Activated naive CD4-positive, alpha-beta T cell treated with anti-CD3 and anti-CD28 coated beads for 36 hours (primary cell): ENCODE measurements at regions of chr21 and their contacts with region 1.

Region 1: DNA sequence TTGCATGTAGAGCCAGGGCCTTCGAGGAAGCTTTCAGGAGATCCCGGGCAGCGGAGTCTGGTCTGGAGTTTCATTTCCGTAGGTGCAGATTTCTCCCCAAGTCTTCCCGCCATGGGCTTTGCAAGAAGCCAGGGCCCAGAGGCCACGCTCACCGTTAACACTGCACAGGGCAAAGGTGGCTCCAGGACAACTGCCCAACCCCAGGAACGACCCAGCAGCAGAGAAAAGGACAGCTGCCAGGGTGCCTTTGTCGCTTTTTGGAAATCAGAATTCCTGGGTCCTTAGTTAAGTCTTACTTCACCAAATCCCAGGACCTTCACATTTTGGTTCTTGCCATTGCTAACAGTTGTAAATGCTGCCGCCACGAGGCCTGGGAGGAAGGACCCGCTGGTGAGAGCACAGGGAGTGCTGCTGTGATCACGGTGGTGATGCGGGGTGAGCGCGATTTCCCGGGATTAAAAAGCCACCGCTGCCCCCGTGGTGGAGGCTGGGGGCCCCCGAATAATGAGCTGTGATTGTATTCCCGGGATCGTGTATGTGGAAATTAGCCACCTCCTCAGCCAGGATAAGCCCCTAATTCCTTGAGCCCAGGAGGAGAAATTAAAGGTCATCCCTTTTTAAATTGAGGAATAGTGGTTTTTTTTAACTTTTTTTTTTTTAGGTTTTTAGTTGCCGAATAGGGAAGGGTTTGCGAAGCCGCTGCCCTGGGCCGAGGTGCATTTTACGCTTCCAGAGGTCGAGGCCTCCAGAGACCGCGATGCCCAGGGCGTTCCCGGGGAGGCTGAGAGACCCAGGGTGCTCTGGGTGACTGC is 8.2 kb downstream of the SIM2 start:
- DNase-seq: peak; percentile 52
- H3K4me3 Mint-ChIP-seq: no peak overlapping the region
- H3K27ac Mint-ChIP-seq: no peak overlapping the region
- H3K4me1 Mint-ChIP-seq: peaks cover 49% of the 10 kb centered on the region
- H3K27me3 Mint-ChIP-seq: peaks cover 80% of the 10 kb centered on the region

Region 2: GRCh38 chr21:36691555-36692041 is 15.6 kb before region 1 on chr21:
- CTCF ChIA-PET with region 1: interaction called, 3 read pairs
- intact Hi-C with region 1: loop called (anchors 2 kb)
- DNase-seq: no peak
- H3K4me3 Mint-ChIP-seq: no peak overlapping the region
- H3K27ac Mint-ChIP-seq: no peak overlapping the region
- H3K4me1 Mint-ChIP-seq: peaks cover 14% of the 10 kb centered on the region
- H3K27me3 Mint-ChIP-seq: peaks cover 76% of the 10 kb centered on the region

Region 3: GRCh38 chr21:36881228-36881627 is 174.1 kb after region 1 on chr21:
- CTCF ChIA-PET with region 1: no interaction called
- intact Hi-C with region 1: no loop called
- DNase-seq: no peak
- H3K4me3 Mint-ChIP-seq: no peak overlapping the region
- H3K27ac Mint-ChIP-seq: no peak overlapping the region
- H3K4me1 Mint-ChIP-seq: no peaks in the 10 kb centered on the region
- H3K27me3 Mint-ChIP-seq: no peaks in the 10 kb centered on the region

Region 4: DNA sequence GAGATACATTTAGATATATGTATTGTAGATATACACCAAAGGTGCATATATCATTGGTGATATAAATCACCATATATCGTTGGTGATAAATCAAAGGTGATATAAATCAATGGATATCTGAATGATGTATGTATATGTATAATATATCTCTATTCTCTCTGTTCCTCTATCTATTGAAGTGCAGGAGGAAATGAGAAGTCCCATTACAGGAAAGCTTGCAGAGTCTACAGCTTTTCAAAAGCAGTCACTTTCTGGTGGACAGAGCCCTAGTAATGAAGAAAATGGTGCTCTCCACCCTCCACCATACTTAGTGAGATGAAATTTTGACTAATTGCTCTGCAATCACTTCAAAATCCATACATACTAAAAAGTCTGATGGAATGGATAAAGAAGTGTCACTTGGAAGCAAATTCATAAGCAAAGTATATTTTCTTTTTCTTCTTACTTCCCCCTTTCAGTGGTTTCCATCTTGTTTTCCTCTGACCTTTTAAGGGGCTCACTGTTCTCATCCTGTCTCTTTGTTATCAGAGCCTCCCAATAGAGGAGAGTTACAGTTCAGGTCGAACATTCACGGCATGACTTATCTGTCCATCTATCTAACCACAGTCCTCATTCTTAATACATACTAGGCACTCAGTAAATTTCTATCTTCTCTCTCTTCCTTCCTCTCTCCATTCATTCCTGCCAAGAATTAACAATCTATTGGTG is 981.9 kb after region 1 on chr21:
- CTCF ChIA-PET with region 1: no interaction called
- intact Hi-C with region 1: no loop called
- DNase-seq: no peak
- H3K4me3 Mint-ChIP-seq: no peak overlapping the region
- H3K27ac Mint-ChIP-seq: no peak overlapping the region
- H3K4me1 Mint-ChIP-seq: no peaks in the 10 kb centered on the region
- H3K27me3 Mint-ChIP-seq: peaks cover 3% of the 10 kb centered on the region